HepG2 (cell line): ENCODE measurements at regions of chr5 and their contacts with region 1.

Region 1: DNA sequence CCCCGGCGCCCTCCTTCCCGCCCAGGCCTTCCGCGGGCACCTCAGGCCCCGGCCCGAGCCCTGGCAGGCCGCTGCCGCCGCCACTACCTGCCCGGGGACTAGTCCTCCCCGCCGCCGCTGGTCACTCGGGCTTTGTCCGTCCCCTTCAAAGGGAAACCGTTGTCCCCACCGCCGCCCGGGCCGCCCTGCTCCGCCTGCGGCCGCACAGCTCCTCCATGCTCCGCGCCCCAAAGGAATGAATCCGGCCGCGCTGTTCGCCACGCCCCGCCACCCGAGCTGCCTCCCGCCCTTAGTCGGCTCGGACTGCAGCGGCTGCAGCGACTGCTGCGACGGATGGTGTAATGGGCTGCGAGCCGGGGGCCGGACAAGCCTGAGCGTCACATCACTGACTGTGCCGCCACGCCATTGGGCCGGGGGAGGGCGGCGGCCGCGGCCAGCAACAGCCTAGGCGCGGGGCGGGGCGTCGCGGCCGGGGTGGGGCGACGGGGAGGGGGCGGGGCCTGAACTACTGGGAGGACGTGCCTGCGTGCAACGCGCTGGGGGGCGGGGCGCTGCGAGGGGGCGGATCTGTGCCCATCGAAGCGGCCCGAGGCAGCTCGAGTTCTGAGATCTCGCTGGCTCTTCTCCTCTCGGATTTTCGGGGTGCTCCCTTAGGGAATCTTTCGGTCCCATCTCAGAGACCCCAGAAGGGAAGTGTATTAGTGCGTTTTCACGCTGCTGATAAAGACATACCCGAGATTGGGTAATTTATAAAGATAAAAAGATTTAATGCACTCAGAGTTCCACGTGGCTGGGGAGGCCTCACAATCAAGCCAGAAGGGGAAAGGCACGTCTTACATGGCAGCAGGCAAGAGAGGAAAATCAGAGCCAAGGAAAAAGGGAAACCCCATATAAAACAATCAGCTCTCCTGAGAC is at the start of gene FEM1C:
- DNase-seq: peak; percentile 91
- ATAC-seq: peak; percentile 97
- H3K4me3 ChIP-seq: peak within 1 kb of the TSS; percentile 87 to 93 (median 91)
- H3K27ac ChIP-seq: peak within 1 kb of the TSS; percentile 93
- H3K4me1 ChIP-seq: peaks cover 24% of the 10 kb centered on the region
- H3K27me3 ChIP-seq: no peaks in the 10 kb centered on the region; a peak in 1 of 5 replicates
- CTCF ChIP-seq: peak; percentile 26; the same call in 1 of the 2 replicates
- EP300 ChIP-seq: no peak
- POLR2A ChIP-seq: peak; percentile 88 to 95
- RAD21 ChIP-seq: peak; percentile 30; the same call in 1 of the 2 replicates
- total RNA-seq, gene FEM1C: 5.5 and 11.1 TPM in 2 replicates

Region 2: GRCh38 chr5:115579747-115580173 is 35.1 kb after region 1 on chr5:
- CTCF ChIA-PET with region 1: interaction called, 4 read pairs
- POLR2A ChIA-PET with region 1: no interaction called
- in situ Hi-C with region 1: no loop called
- intact Hi-C with region 1: loop called (anchors 1 kb)
- DNase-seq: no peak
- ATAC-seq: no peak
- H3K4me3 ChIP-seq: no peak overlapping the region
- H3K27ac ChIP-seq: no peak overlapping the region
- H3K4me1 ChIP-seq: no peaks in the 10 kb centered on the region
- H3K27me3 ChIP-seq: peaks cover 0 to 3% of the 10 kb centered on the region in 2 experiments; a peak in 2 of 5 replicates
- CTCF ChIP-seq: no peak
- EP300 ChIP-seq: no peak
- POLR2A ChIP-seq: no peak
- RAD21 ChIP-seq: no peak

Region 3: DNA sequence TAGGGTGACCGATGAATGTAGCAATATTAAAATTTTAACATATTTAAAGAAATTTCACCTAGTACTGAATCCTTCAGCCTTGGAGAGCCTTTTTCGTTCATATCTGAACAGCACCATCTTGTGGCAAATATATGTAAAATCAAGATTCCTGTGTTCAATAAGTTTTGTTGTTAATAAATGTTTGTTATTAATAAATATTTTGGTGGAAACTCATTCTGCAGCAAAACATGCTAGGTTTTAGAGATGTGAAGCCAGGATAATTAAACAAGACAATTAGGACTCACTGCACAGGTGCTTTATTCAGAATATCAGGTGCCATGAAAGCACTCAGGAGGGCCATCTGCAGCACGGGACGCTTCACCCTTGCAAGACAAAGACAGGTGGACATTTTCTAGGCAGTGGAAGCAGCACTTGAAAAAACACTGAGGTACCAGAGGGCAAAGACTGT is 41.9 kb after region 1 on chr5:
- CTCF ChIA-PET with region 1: interaction called, 7 read pairs
- POLR2A ChIA-PET with region 1: no interaction called
- in situ Hi-C with region 1: loop called (anchors 5 kb)
- intact Hi-C with region 1: loop called (anchors 1 kb)
- DNase-seq: peak; percentile 4
- ATAC-seq: no peak
- H3K4me3 ChIP-seq: no peak overlapping the region
- H3K27ac ChIP-seq: no peak overlapping the region
- H3K4me1 ChIP-seq: no peaks in the 10 kb centered on the region
- H3K27me3 ChIP-seq: no peaks in the 10 kb centered on the region
- CTCF ChIP-seq: peak; percentile 52
- EP300 ChIP-seq: no peak
- POLR2A ChIP-seq: no peak
- RAD21 ChIP-seq: no peak

Region 4: GRCh38 chr5:115625579-115626444 is 81.1 kb after region 1 on chr5 and contains the start of gene TMED7:
- CTCF ChIA-PET with region 1: no interaction called
- POLR2A ChIA-PET with region 1: interaction called, 3 read pairs
- in situ Hi-C with region 1: no loop called
- intact Hi-C with region 1: loop called (anchors 1 kb)
- DNase-seq: peak; percentile 95
- ATAC-seq: peak; percentile 94
- H3K4me3 ChIP-seq: peak within 1 kb of the TSS; percentile 77 to 88 (median 78)
- H3K27ac ChIP-seq: peak within 1 kb of the TSS; percentile 89
- H3K4me1 ChIP-seq: peaks cover 36% of the 10 kb centered on the region
- H3K27me3 ChIP-seq: no peaks in the 10 kb centered on the region; a peak in 1 of 5 replicates
- CTCF ChIP-seq: peak; percentile 10; the same call in 1 of the 2 replicates
- EP300 ChIP-seq: 0 out of 4 replicates have a peak, but pooled peaks of 1 of the 2 experiments have one; percentile 7
- POLR2A ChIP-seq: peak; percentile 72 to 94
- RAD21 ChIP-seq: no peak
- total RNA-seq, gene TMED7: 89.1 and 113 TPM in 2 replicates

Region 5: GRCh38 chr5:115831163-115831768 is 286.6 kb after region 1 on chr5:
- CTCF ChIA-PET with region 1: no interaction called
- POLR2A ChIA-PET with region 1: no interaction called
- in situ Hi-C with region 1: loop called (anchors 10 kb)
- intact Hi-C with region 1: no loop called
- DNase-seq: peak; percentile 57
- ATAC-seq: peak; percentile 82
- H3K4me3 ChIP-seq: no peak overlapping the region
- H3K27ac ChIP-seq: no peak overlapping the region
- H3K4me1 ChIP-seq: peaks cover 24% of the 10 kb centered on the region
- H3K27me3 ChIP-seq: no peaks in the 10 kb centered on the region
- CTCF ChIP-seq: peak; percentile 75
- EP300 ChIP-seq: no peak
- POLR2A ChIP-seq: no peak
- RAD21 ChIP-seq: peak; percentile 46; the same call in 1 of the 2 replicates

Region 6: DNA sequence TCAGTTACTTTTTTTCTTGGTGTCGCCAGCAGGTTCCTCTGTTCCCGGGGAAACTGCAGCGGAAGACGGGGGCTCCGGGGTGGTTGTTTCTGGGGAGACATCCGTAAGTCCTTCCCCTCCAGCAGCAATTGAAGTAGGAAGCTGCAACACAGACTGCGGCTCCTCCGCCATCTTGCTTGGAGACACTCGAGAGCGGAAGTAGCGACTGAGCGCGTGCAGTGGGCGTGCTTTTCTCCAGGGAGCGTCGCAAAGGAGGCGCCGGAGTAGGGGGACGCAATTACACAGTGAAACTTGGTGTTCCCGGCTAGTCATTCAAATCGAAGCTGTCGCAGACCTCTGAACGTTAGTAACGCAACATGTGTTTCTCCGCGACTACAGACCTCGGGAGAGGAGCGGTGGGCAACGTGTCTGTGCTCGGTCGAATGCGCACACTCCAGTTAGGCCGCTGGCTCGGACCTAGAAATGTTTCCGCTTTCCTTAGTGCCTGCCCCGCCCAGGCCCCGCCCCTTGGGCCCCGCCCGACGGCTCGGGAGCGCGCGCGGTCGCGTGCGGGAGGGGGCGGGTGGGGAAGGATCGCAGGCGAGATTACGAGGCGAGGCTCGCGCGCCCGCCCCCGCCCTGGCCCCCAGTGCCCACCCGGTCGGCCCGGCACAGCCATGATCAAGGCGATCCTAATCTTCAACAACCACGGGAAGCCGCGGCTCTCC is 296.8 kb after region 1 on chr5 and contains the starts of genes AP3S1 and ATG12:
- CTCF ChIA-PET with region 1: no interaction called
- POLR2A ChIA-PET with region 1: no interaction called
- in situ Hi-C with region 1: loop called (anchors 10 kb)
- intact Hi-C with region 1: loop called (anchors 5 kb)
- DNase-seq: peak; percentile 88
- ATAC-seq: peak; percentile 85
- H3K4me3 ChIP-seq: peak within 1 kb of the TSS; percentile 77 to 98 (median 91)
- H3K27ac ChIP-seq: peak within 1 kb of the TSS; percentile 99
- H3K4me1 ChIP-seq: peaks cover 50% of the 10 kb centered on the region
- H3K27me3 ChIP-seq: no peaks in the 10 kb centered on the region; a peak in 1 of 5 replicates
- CTCF ChIP-seq: 0 out of 2 replicates have a peak, but pooled peaks have one; percentile 10
- EP300 ChIP-seq: no peak
- POLR2A ChIP-seq: peak; percentile 86 to 93
- RAD21 ChIP-seq: peak; percentile 17; the same call in 1 of the 2 replicates
- total RNA-seq, gene AP3S1: 85.9 and 88.8 TPM in 2 replicates
- total RNA-seq, gene ATG12: 45.1 and 46.4 TPM in 2 replicates